Panc1 (cell line): ENCODE measurements at regions of chr2 and their contacts with region 1.

Region 1: GRCh38 chr2:38750891-38751595 is at the start of gene SRSF7:
- DNase-seq: peak; percentile 97
- ATAC-seq: peak; percentile 94
- H3K4me3 ChIP-seq: peak within 1 kb of the TSS; percentile 98 to 100
- H3K27ac ChIP-seq: peak within 1 kb of the TSS; percentile 98
- H3K4me1 ChIP-seq: peaks cover 36% of the 10 kb centered on the region
- H3K27me3 ChIP-seq: no peaks in the 10 kb centered on the region
- CTCF ChIP-seq: no peak
- total RNA-seq, gene SRSF7: 220 TPM

Region 2: DNA sequence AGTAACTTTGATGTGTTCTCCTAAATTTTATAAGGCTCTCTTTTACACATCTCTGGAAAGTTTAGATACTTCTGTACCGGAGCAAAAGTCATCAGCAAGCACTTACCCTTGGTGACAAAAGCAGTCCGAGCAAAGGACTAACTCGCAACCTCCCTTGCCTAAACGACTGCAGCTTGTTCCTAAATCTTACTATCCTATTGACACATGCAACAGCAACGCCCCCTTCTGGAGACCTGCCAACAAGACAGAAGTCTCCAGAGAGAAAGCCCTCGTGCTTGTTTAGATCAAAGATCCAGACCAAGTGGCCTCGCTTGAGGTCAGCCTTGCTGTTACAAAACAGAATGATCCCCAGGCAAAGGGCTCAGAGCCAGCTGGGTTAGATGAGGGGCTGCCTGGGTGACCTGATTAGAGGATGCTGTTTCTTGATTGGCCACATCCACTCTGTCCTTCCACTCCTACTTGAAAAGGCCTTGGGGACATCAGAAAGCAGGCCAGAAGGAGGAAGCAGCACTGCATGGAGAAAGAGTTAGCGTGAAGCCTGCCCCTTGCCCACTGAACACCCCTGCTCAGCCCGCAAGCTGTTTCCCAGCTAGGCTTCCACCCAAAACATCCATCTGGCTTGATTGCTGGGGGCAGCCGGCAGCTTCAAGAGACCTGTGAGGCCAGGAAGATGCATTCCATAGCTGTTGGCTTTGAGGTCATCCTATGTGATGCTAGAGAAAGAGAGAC is 242.6 kb before region 1 on chr2:
- CTCF ChIA-PET with region 1: no interaction called
- POLR2A ChIA-PET with region 1: interaction called, 10 read pairs
- in situ Hi-C with region 1: no loop called
- intact Hi-C with region 1: no loop called
- DNase-seq: peak; percentile 38
- ATAC-seq: peak; percentile 82
- H3K4me3 ChIP-seq: no peak overlapping the region
- H3K27ac ChIP-seq: no peak overlapping the region
- H3K4me1 ChIP-seq: no peaks in the 10 kb centered on the region
- H3K27me3 ChIP-seq: no peaks in the 10 kb centered on the region
- CTCF ChIP-seq: peak; percentile 81

Region 3: DNA sequence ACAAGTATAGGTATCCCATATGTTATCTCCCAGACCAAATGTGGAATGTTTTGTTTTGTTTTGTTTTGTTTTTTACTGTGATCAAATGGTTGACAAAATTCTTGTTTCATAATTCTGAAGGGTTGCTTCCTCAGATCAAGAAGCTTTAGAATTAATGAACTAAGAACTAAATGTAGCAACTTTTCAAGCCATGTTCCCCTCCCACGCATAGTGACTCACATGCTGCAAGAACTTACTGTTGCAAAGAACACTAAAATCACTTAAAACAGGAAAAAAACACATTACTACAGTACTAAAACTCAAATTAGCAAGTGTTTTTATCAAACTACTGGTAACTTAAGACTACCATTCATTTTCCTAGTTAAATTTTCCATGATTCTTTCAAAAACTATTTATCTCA is 178.9 kb before region 1 on chr2:
- CTCF ChIA-PET with region 1: no interaction called
- POLR2A ChIA-PET with region 1: interaction called, 10 read pairs
- in situ Hi-C with region 1: loop called (anchors 25 kb)
- intact Hi-C with region 1: no loop called
- DNase-seq: no peak
- ATAC-seq: no peak
- H3K4me3 ChIP-seq: no peak overlapping the region
- H3K27ac ChIP-seq: no peak overlapping the region
- H3K4me1 ChIP-seq: no peaks in the 10 kb centered on the region
- H3K27me3 ChIP-seq: no peaks in the 10 kb centered on the region
- CTCF ChIP-seq: no peak

Region 4: DNA sequence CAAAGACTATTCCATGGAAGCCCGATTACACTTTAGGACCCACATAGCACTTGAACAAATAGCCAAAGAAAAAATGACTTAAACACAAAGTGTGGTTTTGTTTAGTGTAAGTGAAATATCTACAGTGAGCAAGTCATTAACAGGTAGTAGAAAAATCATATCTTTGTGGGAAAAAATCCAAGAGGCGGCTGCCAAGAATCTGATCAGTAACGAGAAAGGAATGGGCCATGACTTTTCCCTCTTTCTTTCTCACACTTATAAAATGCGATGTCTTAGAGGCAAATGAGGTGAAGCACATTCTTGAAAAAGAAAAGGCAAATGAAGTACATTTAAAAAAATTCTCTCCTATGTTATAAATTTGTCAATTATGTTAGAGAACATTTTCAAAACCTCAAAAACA is 14.1 kb after region 1 on chr2:
- CTCF ChIA-PET with region 1: no interaction called
- POLR2A ChIA-PET with region 1: interaction called, 11 read pairs
- in situ Hi-C with region 1: no loop called
- intact Hi-C with region 1: no loop called
- DNase-seq: no peak
- ATAC-seq: no peak
- H3K4me3 ChIP-seq: no peak overlapping the region
- H3K27ac ChIP-seq: no peak overlapping the region
- H3K4me1 ChIP-seq: no peaks in the 10 kb centered on the region
- H3K27me3 ChIP-seq: no peaks in the 10 kb centered on the region
- CTCF ChIP-seq: no peak

Region 5: GRCh38 chr2:38783586-38783985 is 32.5 kb after region 1 on chr2:
- CTCF ChIA-PET with region 1: no interaction called
- POLR2A ChIA-PET with region 1: interaction called, 10 read pairs
- in situ Hi-C with region 1: no loop called
- intact Hi-C with region 1: no loop called
- DNase-seq: no peak
- ATAC-seq: peak; percentile 20; the same call in 1 of the 2 replicates
- H3K4me3 ChIP-seq: no peak overlapping the region
- H3K27ac ChIP-seq: no peak overlapping the region
- H3K4me1 ChIP-seq: peaks cover 3% of the 10 kb centered on the region; the same call in 1 of the 2 replicates
- H3K27me3 ChIP-seq: no peaks in the 10 kb centered on the region
- CTCF ChIP-seq: no peak

Region 6: DNA sequence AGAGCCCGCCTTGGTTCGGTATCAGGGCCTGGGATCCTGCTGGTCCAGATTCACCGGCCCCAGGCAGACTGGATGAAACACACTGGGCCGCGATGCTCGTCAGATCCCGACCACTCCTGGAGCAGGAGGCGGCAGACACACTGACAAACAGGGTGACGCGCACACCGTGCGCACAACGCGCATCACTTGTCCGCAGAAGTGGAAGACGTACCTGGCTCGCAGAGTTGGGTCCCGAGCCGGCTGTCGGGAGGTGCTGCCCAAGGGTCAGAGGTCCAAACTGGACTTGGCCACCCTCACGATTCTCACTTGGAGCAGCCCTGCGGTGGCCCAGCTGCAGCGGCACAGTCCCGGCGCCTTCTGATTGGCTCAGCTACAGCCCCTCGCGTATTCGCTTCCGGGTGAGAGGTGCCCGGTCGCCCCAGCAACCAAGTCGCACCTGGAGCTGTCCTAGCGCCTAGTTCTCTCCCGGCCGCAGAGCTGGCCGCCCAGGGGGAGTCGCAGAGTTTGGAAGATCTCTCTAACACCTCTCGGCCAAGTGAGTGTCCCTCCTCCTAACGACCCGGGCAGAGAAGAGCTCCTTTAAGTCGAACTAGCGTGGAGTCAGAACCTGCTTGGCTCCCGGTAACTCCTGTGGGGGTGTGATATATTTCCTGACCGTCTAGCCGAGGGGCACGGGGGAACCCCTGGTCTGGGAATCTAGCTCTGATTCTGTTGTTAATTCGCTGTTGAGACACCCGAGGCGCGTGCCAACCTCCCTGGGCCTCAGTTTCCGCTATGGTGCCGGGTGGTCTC is 124.7 kb after region 1 on chr2 and contains the starts of genes DHX57 and MORN2:
- CTCF ChIA-PET with region 1: no interaction called
- POLR2A ChIA-PET with region 1: interaction called, 15 read pairs
- in situ Hi-C with region 1: no loop called
- intact Hi-C with region 1: no loop called
- DNase-seq: peak; percentile 75
- ATAC-seq: peak; percentile 100
- H3K4me3 ChIP-seq: peak within 1 kb of the TSS; percentile 76 to 99
- H3K27ac ChIP-seq: peak within 1 kb of the TSS; percentile 83
- H3K4me1 ChIP-seq: peaks cover 5% of the 10 kb centered on the region; the same call in 1 of the 2 replicates
- H3K27me3 ChIP-seq: no peaks in the 10 kb centered on the region
- CTCF ChIP-seq: no peak
- total RNA-seq, gene DHX57: 20.6 TPM
- total RNA-seq, gene MORN2: 10.1 TPM